ENCODE measurements at regions of chr4 and their contacts with region 1.

Region 1: GRCh38 chr4:17112292-17112659 is 213.8 kb upstream of the LDB2 start:
- DNase-seq: peak; percentile 19 to 83
- H3K4me3 ChIP-seq: no peak overlapping the region
- H3K27ac ChIP-seq: no peak overlapping the region
- H3K4me1 ChIP-seq: no peaks in the 10 kb centered on the region
- H3K27me3 ChIP-seq: no peaks in the 10 kb centered on the region
- CTCF ChIP-seq: peak; percentile 69 to 91 (median 72)
- EP300 ChIP-seq: no peak
- POLR2A ChIP-seq: no peak
- RAD21 ChIP-seq: peak; percentile 71 to 75

Region 2: GRCh38 chr4:16942491-16942890 is 169.8 kb before region 1 on chr4:
- CTCF ChIA-PET with region 1: no interaction called
- POLR2A ChIA-PET with region 1: no interaction called
- DNase-seq: no peak
- H3K4me3 ChIP-seq: peak overlapping the region in 1 of 4 experiments; percentile 5; a peak in 1 of 8 replicates
- H3K27ac ChIP-seq: no peak overlapping the region
- H3K4me1 ChIP-seq: peaks cover 0 to 5% (median 1%) of the 10 kb centered on the region in 4 experiments; a peak in 4 of 7 replicates
- H3K27me3 ChIP-seq: 0 out of 7 replicates have a peak, but pooled peaks cover 0 to 2% (median 0%) of the 10 kb centered on the region in 4 experiments
- CTCF ChIP-seq: no peak
- EP300 ChIP-seq: no peak
- POLR2A ChIP-seq: no peak
- RAD21 ChIP-seq: no peak

Region 3: GRCh38 chr4:17098996-17099395 is 13.3 kb before region 1 on chr4:
- CTCF ChIA-PET with region 1: interaction called, 10 read pairs
- POLR2A ChIA-PET with region 1: no interaction called
- DNase-seq: no peak
- H3K4me3 ChIP-seq: no peak overlapping the region
- H3K27ac ChIP-seq: no peak overlapping the region
- H3K4me1 ChIP-seq: peaks cover 0 to 2% (median 0%) of the 10 kb centered on the region in 4 experiments; a peak in 1 of 7 replicates
- H3K27me3 ChIP-seq: no peaks in the 10 kb centered on the region
- CTCF ChIP-seq: no peak
- EP300 ChIP-seq: no peak
- POLR2A ChIP-seq: no peak
- RAD21 ChIP-seq: no peak

Region 4: DNA sequence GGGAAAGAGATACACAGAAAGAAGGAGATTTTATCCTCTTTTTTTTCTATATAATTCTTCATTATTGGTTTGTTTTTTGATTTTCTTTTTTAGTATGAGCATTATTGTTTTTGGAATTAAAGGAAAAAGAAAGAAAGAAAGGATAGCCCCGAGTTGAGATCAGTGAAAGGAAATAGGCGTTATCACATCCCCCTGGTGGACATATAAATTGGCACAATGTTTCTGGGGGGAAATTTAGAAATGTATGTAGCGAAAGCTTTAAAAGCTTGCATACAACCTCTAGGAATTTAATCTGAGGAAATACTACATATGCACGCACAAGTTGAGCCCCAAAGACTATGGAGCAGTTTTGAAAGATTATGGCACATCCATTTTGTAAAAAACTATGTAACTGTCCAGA is 12.5 kb after region 1 on chr4:
- CTCF ChIA-PET with region 1: interaction called, 10 read pairs
- POLR2A ChIA-PET with region 1: no interaction called
- DNase-seq: no peak
- H3K4me3 ChIP-seq: no peak overlapping the region
- H3K27ac ChIP-seq: no peak overlapping the region
- H3K4me1 ChIP-seq: peaks cover 0 to 3% (median 2%) of the 10 kb centered on the region in 4 experiments; a peak in 2 of 7 replicates
- H3K27me3 ChIP-seq: no peaks in the 10 kb centered on the region
- CTCF ChIP-seq: peak in 2 of 3 experiments; percentile 13 to 23; a peak in 2 of 4 replicates
- EP300 ChIP-seq: no peak
- POLR2A ChIP-seq: no peak
- RAD21 ChIP-seq: peak; percentile 18 to 26; a peak in 3 of 4 replicates